PC-9 (cell line): ENCODE measurements at regions of chr13 and their contacts with region 1.

Region 1: GRCh38 chr13:76723551-76724232 is 162.5 kb downstream of the KCTD12 start:
- DNase-seq: no peak
- H3K4me3 ChIP-seq: no peak overlapping the region
- H3K27ac ChIP-seq: no peak overlapping the region
- H3K4me1 ChIP-seq: no peaks in the 10 kb centered on the region
- H3K27me3 ChIP-seq: no peaks in the 10 kb centered on the region
- CTCF ChIP-seq: no peak

Region 2: DNA sequence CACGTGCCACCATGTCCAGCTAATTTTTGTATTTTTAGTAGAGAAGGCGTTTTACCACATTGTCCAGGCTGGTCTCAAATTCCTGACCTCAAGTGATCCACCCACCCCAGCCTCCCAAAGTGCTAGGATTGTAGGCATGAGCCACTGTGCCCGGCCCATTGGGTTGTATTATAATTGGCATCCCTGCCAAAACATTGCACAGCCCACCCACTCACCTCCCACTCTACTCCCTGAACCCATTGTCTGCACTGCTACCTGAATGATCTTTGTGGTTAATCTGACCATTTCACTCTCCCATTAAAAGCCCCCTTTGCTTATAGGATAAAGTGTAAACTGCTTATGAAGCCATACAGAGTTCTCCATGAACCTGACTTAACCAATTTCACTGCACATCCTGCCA is 188.8 kb after region 1 on chr13:
- CTCF ChIA-PET with region 1: interaction called, 10 read pairs
- POLR2A ChIA-PET with region 1: no interaction called
- intact Hi-C with region 1: no loop called
- DNase-seq: no peak
- H3K4me3 ChIP-seq: no peak overlapping the region
- H3K27ac ChIP-seq: no peak overlapping the region
- H3K4me1 ChIP-seq: no peaks in the 10 kb centered on the region
- H3K27me3 ChIP-seq: no peaks in the 10 kb centered on the region
- CTCF ChIP-seq: no peak

Region 3: DNA sequence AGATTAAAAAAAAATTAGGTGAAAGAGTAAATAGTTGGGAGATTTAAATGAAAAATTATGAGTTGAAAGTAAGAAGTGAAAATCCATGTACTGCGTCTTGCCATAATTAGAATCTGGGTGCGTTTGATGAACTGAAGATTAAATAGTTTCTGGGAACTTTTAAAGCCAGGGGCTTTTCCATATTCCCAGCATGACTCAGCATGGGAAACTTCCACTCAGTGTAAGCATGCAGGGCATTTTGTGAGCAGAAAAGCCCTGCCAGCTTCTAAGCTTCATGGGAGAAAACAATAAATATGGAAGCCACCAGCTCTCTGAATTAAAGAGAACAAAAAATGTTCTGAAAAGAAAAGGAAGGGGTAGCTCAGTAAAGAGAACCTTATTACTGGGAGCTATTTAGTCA is 1256.9 kb after region 1 on chr13:
- CTCF ChIA-PET with region 1: no interaction called
- POLR2A ChIA-PET with region 1: no interaction called
- intact Hi-C with region 1: no loop called
- DNase-seq: peak in 1 of 2 experiments; percentile 14
- H3K4me3 ChIP-seq: no peak overlapping the region; the same call in 1 of the 2 replicates
- H3K27ac ChIP-seq: peak overlapping the region; percentile 53
- H3K4me1 ChIP-seq: peaks cover 14% of the 10 kb centered on the region; the same call in 1 of the 2 replicates
- H3K27me3 ChIP-seq: no peaks in the 10 kb centered on the region
- CTCF ChIP-seq: no peak